ENCODE measurements at regions of chr5 and their contacts with region 1.

Region 1: DNA sequence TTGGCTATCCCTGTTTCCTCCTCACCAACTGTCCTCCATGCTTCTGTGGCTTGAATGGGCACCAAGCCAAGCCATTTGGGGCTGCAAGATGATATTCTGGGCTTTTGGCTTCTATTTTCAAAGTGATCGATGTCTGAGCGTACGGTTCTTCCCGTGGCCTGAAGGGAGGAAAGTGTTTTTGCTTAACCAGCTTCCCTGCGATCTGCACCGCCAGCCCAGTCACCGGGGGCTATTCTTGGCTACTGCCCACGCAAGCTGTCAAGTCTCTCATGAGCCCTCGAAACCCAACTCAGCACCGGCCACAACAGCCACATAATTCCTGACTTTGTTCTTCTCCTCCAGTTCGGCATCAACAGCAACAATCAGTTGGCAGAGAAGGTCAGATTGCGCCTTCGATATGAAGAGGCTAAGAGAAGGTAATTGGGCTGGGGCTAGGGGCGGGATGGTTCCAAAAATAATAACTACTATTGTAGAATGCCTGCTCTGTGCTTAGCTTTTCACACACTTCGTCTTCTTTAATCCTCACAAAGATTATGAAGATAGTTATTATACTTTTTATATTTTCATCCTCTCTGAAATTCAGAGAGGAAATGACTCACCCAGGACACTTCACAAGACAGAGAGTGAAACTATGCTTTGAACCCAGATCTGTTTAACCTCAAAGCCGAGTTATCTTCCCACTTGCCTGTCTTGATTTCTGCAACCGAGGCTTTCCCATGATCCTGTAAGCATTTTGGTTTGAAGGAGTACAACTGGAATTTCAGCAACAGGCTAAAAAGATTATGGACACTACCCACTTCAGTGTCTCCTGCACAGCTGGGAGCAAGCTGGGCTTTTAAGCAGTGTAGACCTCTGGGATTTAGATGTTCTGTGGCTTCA is 76.5 kb upstream of the RARS1 start:
- DNase-seq: no peak
- H3K4me3 Mint-ChIP-seq: no peak overlapping the region
- H3K27ac Mint-ChIP-seq: no peak overlapping the region
- H3K4me1 Mint-ChIP-seq: peaks cover 22% of the 10 kb centered on the region
- H3K27me3 Mint-ChIP-seq: peaks cover 26% of the 10 kb centered on the region

Region 2: GRCh38 chr5:168227973-168228615 is 181.7 kb before region 1 on chr5:
- intact Hi-C with region 1: loop called (anchors 1 kb)
- DNase-seq: peak; percentile 14
- H3K4me3 Mint-ChIP-seq: no peak overlapping the region
- H3K27ac Mint-ChIP-seq: no peak overlapping the region
- H3K4me1 Mint-ChIP-seq: peaks cover 25% of the 10 kb centered on the region
- H3K27me3 Mint-ChIP-seq: peaks cover 34% of the 10 kb centered on the region

Region 3: DNA sequence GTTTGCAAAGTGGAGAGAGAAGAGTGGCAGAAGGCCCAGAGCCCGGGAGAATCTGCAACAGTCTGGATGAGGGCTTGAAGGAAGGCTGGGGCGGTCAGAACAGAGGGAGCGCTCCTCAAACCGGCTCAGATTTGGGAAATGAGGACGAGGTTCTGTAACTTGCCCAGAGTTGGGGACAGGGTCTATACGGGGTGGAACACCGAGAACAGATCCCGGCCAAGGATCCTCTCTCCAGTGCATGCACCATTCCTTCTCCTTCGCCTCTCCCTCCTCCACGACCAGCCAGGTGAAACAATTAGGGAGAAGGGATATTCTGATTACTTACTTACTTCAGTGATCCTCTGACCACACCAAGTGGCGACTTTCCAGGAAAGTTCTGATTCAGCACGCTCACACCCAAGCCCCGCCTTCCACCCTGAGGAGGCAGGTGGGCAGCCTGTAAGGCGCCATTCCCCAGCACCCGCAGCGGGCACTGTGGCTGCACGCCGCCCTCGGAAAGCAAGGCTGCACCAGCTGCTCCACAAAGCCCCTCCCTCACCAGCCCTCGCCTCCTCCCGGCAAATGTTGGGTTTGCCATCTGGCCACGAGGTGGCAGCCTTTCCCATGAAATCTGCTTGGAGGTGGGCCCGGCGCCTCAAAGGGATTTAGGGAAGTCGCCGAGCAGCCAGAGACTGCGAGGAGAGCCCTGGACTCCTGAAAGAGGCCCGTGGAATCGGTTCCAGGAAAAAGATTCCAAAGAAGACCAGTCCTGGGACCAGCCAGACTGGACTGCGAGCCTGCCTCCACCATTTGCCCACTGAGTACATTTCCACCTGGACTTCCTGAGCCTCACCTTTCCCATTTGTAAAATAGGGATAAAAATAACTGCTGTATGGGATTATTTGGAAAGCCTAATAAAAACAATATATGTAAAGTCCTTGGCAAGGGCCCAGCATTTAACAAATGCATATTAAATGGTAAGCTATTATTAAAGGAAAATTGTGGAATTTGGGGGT is 140.6 kb before region 1 on chr5:
- intact Hi-C with region 1: loop called (anchors 10 kb)
- DNase-seq: peak; percentile 48
- H3K4me3 Mint-ChIP-seq: no peak overlapping the region
- H3K27ac Mint-ChIP-seq: no peak overlapping the region
- H3K4me1 Mint-ChIP-seq: peaks cover 6% of the 10 kb centered on the region
- H3K27me3 Mint-ChIP-seq: peaks cover 17% of the 10 kb centered on the region

Region 4: DNA sequence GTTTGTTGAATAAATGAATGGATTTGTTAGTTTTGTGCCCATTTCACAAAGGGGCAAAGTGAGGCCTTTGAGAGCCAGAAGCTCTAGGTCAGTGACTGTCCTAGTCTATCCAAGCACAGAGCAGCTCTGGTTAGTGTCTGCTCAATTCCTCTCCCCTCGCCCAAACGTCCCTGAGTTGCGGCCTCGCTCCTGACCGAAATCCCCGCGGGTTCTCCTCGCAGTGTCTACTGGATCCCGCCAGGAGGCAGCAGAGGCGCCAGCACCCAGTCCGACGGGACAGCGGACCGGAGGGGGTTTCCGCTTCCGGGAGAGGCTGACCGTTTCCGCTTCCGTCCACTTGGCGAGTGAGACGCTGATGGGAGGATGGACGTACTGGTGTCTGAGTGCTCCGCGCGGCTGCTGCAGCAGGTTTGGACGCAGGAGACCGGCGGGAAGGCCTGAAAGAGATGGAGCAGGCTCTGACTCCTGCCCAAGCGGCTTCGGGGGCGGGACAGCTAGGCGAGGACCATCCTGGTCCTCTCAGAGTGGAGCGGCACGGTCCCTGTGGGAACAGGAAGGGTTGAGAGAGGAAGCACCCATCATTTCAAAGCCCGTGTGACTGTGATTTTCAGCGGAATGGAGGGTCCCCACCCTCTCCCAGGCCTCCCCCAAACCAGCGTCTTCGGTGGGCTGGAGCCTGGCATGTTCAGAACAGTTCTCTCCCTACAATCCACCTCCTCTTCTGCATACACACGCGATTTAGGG is 76.5 kb after region 1 on chr5 and contains the start of gene RARS1:
- intact Hi-C with region 1: loop called (anchors 2 kb)
- DNase-seq: peak; percentile 86
- H3K4me3 Mint-ChIP-seq: peak within 1 kb of the TSS; percentile 100
- H3K27ac Mint-ChIP-seq: peak within 1 kb of the TSS; percentile 86
- H3K4me1 Mint-ChIP-seq: peaks cover 38% of the 10 kb centered on the region
- H3K27me3 Mint-ChIP-seq: no peaks in the 10 kb centered on the region
- total RNA-seq, gene RARS1: 137 and 145 TPM in 2 replicates

Measured in activated T-helper 1 cell treated with anti-CD3 and anti-CD28 coated beads, Interleukin-12 subunit alpha, Interleukin-12 subunit beta, Interleukin-2, Interleukin-4 antibody, amounts not matched to agents 30 ng/mL and 10 ng/mL and 1 ng/mL, durations not matched to agents 14 hours and 24 hours and 36 hours (primary cell).